Activated T-helper 1 cell treated with anti-CD3 and anti-CD28 coated beads, Interleukin-12 subunit alpha, Interleukin-12 subunit beta, Interleukin-2, Interleukin-4 antibody, amounts not matched to agents 30 ng/mL and 10 ng/mL and 1 ng/mL, durations not matched to agents 14 hours and 24 hours and 36 hours (primary cell): ENCODE measurements at regions of chr2 and their contacts with region 1.

Region 1: GRCh38 chr2:6474161-6475140 is 391.3 kb downstream of the CMPK2 start:
- DNase-seq: no peak
- H3K4me3 Mint-ChIP-seq: no peak overlapping the region
- H3K27ac Mint-ChIP-seq: no peak overlapping the region
- H3K4me1 Mint-ChIP-seq: no peaks in the 10 kb centered on the region
- H3K27me3 Mint-ChIP-seq: no peaks in the 10 kb centered on the region

Region 2: DNA sequence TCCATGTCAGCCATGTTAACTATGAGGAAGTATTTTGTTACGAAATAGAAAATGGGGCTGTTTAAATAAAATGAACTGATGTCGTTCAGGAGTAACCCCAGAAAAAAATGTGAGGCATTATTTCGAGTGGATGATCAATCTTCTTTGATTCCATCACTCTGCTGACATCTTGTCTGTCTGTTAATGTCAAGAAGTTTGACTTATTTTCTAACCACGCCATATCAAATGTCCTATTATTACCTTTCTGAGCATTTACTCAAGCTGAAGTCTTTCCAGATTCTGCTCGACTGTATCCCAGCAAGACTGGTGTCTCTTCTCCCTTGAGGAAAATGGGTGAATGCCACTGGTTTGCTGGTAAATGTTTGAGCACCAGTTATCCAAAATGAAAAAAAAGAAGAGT is 1455.1 kb before region 1 on chr2:
- intact Hi-C with region 1: loop called (anchors 5 kb)
- DNase-seq: no peak
- H3K4me3 Mint-ChIP-seq: no peak overlapping the region
- H3K27ac Mint-ChIP-seq: no peak overlapping the region
- H3K4me1 Mint-ChIP-seq: no peaks in the 10 kb centered on the region
- H3K27me3 Mint-ChIP-seq: no peaks in the 10 kb centered on the region

Region 3: DNA sequence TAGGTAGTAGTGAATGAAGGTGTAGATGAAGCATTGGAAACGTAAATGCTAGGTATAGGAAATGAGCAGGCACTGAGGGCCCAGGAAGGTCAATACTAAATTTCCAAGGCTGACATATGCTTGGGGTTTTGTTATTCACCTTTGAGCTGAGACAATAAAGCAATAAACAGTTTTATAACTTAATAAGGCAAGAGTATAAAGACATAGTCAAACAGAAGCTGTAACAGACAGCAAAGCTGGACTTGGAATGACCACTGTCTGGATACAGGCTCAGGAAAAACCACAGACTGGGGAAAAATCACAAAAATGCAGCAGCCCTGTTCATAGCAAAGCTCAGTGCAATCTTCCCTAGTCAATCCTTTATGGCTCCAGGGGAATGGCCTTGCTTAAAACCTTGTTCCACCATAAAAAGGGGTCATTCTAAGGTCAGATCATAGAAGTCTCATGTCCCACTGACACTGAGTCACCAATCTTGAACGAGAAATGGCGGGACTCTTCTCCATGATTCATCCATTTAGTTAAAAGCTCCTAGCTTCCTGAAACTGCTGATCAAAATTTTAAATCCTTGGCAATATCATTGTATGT is 102.0 kb before region 1 on chr2:
- intact Hi-C with region 1: no loop called
- DNase-seq: no peak
- H3K4me3 Mint-ChIP-seq: no peak overlapping the region
- H3K27ac Mint-ChIP-seq: no peak overlapping the region
- H3K4me1 Mint-ChIP-seq: no peaks in the 10 kb centered on the region
- H3K27me3 Mint-ChIP-seq: no peaks in the 10 kb centered on the region

Region 4: DNA sequence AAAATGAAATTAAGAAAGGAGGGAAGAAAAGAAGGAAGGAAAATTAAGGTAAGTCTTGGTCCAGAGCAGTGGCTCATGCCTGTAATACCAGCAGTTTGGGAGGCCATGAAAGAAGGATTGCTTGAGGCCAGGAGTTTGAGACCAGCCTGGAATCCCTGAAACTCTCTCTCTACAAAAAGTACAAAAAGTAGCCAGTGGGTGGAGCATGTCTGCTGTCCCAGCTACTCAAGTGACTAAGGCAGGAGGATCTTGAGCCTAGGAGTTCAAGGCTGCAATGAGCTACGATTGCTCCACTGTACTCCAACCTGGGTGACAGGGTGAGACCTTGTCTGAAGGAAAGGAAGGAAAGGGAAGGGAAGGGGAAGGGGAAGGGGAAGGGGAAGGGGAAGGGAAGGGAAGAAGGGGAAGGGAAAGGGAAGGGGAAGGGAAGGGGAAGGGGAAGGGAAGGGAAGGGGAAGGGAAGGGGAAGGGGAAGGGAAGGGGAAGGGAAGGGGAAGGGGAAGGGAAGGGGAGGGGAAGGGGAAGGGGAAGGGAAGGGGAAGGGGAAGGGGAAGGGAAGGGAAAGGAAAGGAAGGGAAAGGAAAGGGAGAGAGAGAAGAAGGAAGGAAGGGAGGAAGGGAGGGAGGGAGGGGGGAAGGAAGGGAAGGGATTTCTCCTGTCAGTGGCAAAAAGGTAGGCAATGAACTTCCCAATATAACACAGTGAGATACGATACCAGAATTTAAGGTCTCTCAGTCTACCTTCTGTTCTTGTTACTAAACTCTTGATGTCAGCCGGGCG is 21.6 kb before region 1 on chr2:
- intact Hi-C with region 1: no loop called
- DNase-seq: no peak
- H3K4me3 Mint-ChIP-seq: no peak overlapping the region
- H3K27ac Mint-ChIP-seq: no peak overlapping the region
- H3K4me1 Mint-ChIP-seq: no peaks in the 10 kb centered on the region
- H3K27me3 Mint-ChIP-seq: no peaks in the 10 kb centered on the region